Right ventricle myocardium inferior (tissue), 1 donor: ENCODE measurements at regions of chr3 and their contacts with region 1.

Region 1: DNA sequence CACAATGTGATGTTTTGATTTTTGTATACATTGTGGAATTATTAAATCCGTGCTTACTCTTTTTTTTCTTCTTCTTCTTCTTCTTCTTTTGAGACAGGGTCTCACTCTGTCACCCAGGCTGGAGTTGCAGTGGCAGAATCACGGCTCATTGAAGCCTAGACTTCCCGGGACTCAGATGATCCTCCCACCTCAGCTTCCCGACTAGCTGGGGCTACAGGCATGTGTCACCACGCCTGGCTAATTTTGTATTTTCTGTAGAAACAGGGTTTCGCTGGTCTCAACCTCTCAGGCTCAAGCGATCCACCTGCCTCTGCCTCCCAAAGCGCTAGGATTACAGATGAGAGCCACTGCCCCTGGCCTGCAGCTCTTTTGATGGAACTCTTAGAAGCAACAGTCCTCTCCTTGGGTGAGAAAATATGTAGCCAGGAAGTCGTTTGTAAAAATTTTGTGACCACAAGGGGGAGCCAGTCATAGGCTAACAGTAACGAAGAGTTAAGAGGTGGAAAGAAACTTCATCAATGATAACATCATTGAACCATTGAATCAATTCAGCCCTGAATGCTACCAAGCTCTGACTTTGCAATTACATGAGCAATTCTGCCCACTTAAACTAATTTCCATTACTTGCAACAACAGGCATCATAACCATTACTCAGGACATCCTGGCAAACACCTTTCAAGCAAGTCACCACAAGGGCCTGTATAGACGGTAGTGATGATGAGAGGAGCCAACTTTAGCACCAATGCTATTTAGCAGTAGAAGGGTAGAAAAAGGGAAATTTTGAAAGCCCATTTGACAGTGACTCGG is 16.7 kb upstream of the CMTM7 start:
- DNase-seq: no peak
- ATAC-seq: peak; percentile 42

Region 2: GRCh38 chr3:32457971-32458471 is 83.0 kb after region 1 on chr3:
- intact Hi-C with region 1: loop called (anchors 5 kb)
- DNase-seq: no peak
- ATAC-seq: peak; percentile 34

Region 3: DNA sequence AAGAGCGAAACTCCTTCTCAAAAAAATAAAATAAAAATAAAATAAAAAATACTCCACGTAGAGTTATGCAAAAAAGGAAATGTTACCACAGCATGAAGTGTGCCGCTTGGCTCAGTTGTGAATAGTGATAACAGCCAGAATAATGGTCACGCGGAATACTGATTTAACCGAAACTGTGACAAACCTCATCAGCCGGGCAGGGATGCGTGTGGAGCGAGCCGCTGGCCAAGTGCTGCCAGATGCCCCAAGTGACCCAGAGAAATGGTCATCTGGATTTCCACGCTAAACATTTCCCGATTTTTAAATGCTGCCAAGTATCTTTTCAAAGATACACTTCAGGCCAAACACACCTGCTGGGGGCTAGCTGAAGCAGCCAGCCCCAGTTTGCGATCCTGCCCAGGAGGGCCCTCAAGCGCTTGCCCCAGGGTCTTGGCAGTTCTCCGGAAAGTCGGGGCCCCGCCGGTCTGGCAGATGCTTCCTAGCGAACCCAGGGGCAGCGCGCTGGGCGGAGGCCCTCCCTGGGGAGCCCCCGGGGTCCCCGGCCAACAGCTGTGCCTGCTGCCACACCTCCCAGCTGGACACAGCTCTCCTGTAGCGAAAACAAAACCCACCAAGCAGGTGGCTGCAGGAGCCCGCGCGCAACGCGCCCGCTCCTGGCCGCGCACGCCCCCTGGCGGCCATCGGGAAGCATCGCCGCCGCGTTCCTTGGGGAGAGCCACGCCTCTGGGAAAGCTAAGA is 92.5 kb after region 1 on chr3:
- intact Hi-C with region 1: loop called (anchors 2 kb)
- DNase-seq: peak; percentile 91
- ATAC-seq: peak; percentile 94